Activated CD4-positive, alpha-beta memory T cell treated with anti-CD3 and anti-CD28 coated beads, Interleukin-2, amount 10 ng/mL, durations not matched to agents 7 days and 5 days (primary cell): ENCODE measurements at regions of chr15 and their contacts with region 1.

Region 1: DNA sequence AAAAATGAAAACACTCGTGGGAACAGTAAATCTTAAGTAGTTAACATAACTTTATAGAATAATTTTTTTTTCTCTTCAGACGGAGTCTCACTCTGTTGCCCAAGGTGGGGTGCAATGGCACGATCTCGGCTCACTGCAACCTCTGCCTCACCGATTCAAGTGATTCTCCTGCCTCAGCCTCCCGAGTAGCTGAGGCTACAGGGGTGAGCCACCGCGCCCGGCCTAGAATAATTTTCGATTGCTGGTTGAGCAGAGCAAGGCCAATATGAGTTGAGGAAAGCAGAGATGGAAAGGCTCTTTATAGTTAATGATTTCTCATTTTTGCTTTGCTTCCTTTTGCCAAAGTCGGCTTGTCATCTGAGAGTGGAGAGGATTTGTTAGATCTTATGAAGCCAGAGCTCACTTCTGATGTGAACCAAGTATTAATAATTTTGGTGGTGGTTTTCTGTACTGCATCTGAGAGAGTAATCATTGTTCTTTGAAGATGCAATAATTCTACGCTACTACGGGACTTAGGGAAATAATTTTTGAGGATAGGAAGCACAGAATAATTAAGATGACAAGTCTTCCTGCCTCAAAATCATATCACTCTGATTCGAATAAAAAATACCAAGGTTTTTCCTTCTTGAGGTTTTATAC is 1.6 kb upstream of the GOLM2 start:
- DNase-seq: no peak
- H3K4me3 Mint-ChIP-seq: peak overlapping the region; percentile 90
- H3K27ac Mint-ChIP-seq: peak overlapping the region; percentile 97
- H3K4me1 Mint-ChIP-seq: peaks cover 39% of the 10 kb centered on the region
- H3K27me3 Mint-ChIP-seq: peaks cover 4% of the 10 kb centered on the region

Region 2: DNA sequence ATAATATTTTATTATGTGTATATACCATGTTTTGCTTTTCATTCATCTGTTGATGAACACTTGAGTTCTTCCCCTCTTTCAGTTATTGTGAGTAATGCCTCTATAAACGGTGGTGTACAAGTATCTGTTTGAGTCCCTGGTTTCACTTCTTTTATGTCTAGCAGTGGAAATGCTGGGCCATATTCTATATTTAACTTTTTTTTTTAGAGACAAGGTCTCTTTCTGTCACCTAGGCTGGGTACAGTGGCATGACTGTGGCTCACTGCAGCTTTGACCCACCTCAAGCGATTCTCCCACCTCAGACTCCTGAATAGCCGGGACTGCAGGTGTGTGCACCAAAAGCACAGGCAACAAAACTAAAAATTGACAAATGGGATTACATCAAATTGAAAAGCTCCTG is 21.5 kb after region 1 on chr15:
- CTCF ChIA-PET with region 1: no interaction called
- POLR2A ChIA-PET with region 1: interaction called, 18 read pairs
- DNase-seq: no peak
- H3K4me3 Mint-ChIP-seq: no peak overlapping the region
- H3K27ac Mint-ChIP-seq: peak overlapping the region; percentile 75
- H3K4me1 Mint-ChIP-seq: peaks cover 33% of the 10 kb centered on the region
- H3K27me3 Mint-ChIP-seq: no peaks in the 10 kb centered on the region

Region 3: GRCh38 chr15:44536962-44537734 is 250.2 kb after region 1 on chr15 and contains the start of gene EIF3J:
- CTCF ChIA-PET with region 1: interaction called, 4 read pairs
- POLR2A ChIA-PET with region 1: interaction called, 12 read pairs
- DNase-seq: peak; percentile 96
- H3K4me3 Mint-ChIP-seq: peak within 1 kb of the TSS; percentile 84
- H3K27ac Mint-ChIP-seq: peak within 1 kb of the TSS; percentile 95
- H3K4me1 Mint-ChIP-seq: peaks cover 56% of the 10 kb centered on the region
- H3K27me3 Mint-ChIP-seq: no peaks in the 10 kb centered on the region
- total RNA-seq, gene EIF3J: 70.6 to 87.8 TPM

Region 4: DNA sequence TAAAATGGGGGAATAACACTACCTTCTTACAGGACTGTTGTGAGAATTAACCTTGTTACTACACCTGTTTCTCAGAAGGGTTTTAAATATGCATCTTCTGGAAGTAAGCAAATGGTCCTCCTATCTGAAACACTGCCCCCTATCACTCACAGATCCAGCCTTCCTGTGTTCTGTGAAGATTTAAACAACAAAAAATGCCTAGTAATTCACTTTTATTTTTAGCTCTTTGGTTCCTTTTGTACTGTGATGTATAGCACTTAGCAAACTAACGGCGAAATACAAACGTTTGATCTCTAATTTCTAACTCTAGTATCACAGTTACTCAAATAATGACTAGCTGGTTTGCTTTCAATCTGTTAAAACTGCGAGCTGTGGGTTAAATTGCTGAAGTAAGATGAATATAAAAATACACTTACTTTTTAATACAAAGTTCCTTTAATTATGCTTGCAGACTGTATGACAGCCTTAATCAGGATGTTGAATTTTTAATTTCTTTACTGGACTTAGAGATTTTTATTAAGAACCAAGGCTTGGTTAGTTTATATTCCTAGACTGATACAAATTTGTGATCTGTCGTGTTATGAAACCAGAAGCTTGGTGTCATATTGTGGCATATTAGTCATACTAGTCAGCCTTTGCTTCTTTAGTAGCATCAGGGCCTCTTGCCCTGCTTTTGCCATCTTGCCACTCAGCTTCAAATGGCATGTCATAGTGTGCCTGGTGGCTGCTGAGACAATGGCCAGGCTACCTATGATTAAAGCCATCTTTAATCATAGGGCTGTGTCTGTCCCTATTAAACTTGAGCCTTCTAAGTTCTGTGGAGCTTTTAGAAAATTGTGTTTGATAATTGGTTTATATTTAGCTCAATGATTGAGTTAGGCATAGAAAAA is 259.2 kb after region 1 on chr15:
- CTCF ChIA-PET with region 1: no interaction called
- POLR2A ChIA-PET with region 1: interaction called, 10 read pairs
- DNase-seq: peak; percentile 64
- H3K4me3 Mint-ChIP-seq: peak overlapping the region; percentile 72
- H3K27ac Mint-ChIP-seq: peak overlapping the region; percentile 97
- H3K4me1 Mint-ChIP-seq: peaks cover 55% of the 10 kb centered on the region
- H3K27me3 Mint-ChIP-seq: no peaks in the 10 kb centered on the region